Mammary epithelial cell (primary cell): ENCODE measurements at regions of chr3 and their contacts with region 1.

Region 1: DNA sequence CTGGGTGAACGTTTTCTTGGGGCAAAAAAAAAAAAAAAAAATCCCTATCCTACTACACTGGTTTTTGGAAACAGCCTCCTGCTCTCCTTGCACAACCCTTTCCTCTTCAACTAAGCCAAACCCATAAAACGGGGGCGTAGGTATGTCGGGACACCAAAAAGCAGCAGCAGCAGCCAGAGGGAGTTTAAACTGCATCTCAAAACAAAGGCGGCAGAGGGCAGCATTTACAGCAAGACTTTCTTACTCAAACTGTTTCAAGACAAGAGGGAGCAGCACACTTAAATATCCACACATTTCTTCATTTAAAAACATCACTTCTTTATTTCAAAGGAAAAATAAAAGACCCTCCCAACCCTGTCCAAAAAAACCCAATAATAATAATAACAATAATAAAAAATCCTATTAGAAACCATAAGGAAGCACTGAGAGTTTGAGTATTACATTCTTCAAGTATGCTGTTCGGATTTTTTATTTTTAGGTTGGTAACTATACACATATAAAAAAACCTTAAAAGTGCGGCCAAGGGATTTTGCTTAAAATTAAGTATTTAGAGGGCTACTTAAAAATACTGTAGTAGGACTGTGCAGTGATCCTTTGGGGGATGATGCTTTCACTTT is 43.9 kb upstream of the PLXND1 start:
- DNase-seq: peak; percentile 70
- H3K4me3 ChIP-seq: no peak overlapping the region
- H3K27ac ChIP-seq: no peak overlapping the region
- H3K4me1 ChIP-seq: peaks cover 26% of the 10 kb centered on the region
- H3K27me3 ChIP-seq: no peaks in the 10 kb centered on the region
- CTCF ChIP-seq: peak; percentile 66 to 76

Region 2: GRCh38 chr3:129548104-129548503 is 102.3 kb before region 1 on chr3:
- CTCF ChIA-PET with region 1: no interaction called
- dilution Hi-C with region 1: no loop called
- in situ Hi-C with region 1: no loop called
- intact Hi-C with region 1: no loop called
- DNase-seq: no peak
- H3K4me3 ChIP-seq: no peak overlapping the region
- H3K27ac ChIP-seq: no peak overlapping the region
- H3K4me1 ChIP-seq: peaks cover 12% of the 10 kb centered on the region
- H3K27me3 ChIP-seq: no peaks in the 10 kb centered on the region
- CTCF ChIP-seq: no peak

Region 3: DNA sequence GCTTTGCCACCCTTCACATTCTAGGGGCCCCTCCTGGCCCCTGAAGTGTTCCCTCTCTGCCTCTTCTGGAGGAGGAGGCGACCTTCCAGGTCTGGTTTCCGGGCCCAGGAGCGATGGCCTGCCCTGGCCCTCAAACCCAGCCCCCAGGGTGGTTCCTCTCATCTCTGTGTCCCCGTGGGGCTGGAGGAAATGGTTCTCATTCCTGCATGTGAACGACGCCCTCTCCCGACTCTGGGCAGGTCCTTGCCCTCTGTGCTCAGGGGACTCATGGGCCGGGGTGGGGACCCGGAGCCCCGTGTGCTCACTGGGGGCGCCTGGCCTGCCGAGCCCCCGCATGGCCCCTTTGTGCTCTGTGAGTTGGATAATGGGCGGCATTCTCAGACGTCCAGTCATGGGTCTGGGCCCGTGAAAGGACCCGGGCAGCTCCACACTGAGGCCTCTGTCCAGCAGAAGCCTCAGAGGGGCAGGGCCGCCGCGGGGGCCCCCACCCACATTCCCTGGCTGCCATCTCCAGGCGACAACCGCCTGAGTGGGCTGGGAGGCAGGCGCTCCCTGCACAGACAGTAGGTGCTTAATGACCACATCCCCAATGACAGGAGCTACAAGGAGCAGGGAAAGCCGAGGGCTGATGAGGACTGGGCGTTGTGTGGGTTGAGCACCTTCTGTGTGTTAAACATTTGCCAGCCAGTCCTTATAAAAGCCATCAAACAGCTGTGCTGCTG is 38.4 kb before region 1 on chr3:
- CTCF ChIA-PET with region 1: no interaction called
- dilution Hi-C with region 1: loop called (anchors 5 kb)
- in situ Hi-C with region 1: no loop called
- intact Hi-C with region 1: no loop called
- DNase-seq: no peak
- H3K4me3 ChIP-seq: no peak overlapping the region
- H3K27ac ChIP-seq: no peak overlapping the region
- H3K4me1 ChIP-seq: peaks cover 4% of the 10 kb centered on the region
- H3K27me3 ChIP-seq: no peaks in the 10 kb centered on the region
- CTCF ChIP-seq: no peak

Region 4: GRCh38 chr3:129718201-129718600 is 67.8 kb after region 1 on chr3:
- CTCF ChIA-PET with region 1: interaction called, 24 read pairs
- dilution Hi-C with region 1: no loop called
- in situ Hi-C with region 1: no loop called
- intact Hi-C with region 1: loop called (anchors 5 kb)
- DNase-seq: no peak
- H3K4me3 ChIP-seq: no peak overlapping the region
- H3K27ac ChIP-seq: no peak overlapping the region
- H3K4me1 ChIP-seq: peaks cover 3% of the 10 kb centered on the region
- H3K27me3 ChIP-seq: no peaks in the 10 kb centered on the region
- CTCF ChIP-seq: no peak

Region 5: GRCh38 chr3:129794311-129795185 is 144.2 kb after region 1 on chr3:
- CTCF ChIA-PET with region 1: no interaction called
- dilution Hi-C with region 1: no loop called
- in situ Hi-C with region 1: no loop called
- intact Hi-C with region 1: loop called (anchors 1 kb)
- DNase-seq: peak; percentile 97
- H3K4me3 ChIP-seq: peak overlapping the region; percentile 49 to 82 (median 55)
- H3K27ac ChIP-seq: peak overlapping the region; percentile 99
- H3K4me1 ChIP-seq: peaks cover 27% of the 10 kb centered on the region
- H3K27me3 ChIP-seq: no peaks in the 10 kb centered on the region
- CTCF ChIP-seq: no peak

Region 6: GRCh38 chr3:129934234-129935123 is 284.1 kb after region 1 on chr3:
- CTCF ChIA-PET with region 1: no interaction called
- dilution Hi-C with region 1: no loop called
- in situ Hi-C with region 1: no loop called
- intact Hi-C with region 1: loop called (anchors 1 kb)
- DNase-seq: no peak
- H3K4me3 ChIP-seq: no peak overlapping the region
- H3K27ac ChIP-seq: no peak overlapping the region
- H3K4me1 ChIP-seq: no peaks in the 10 kb centered on the region
- H3K27me3 ChIP-seq: no peaks in the 10 kb centered on the region
- CTCF ChIP-seq: peak; percentile 80 to 90